ENCODE measurements at regions of chr10 and their contacts with region 1.

Region 1: GRCh38 chr10:84397735-84398144 is 69.4 kb downstream of the CCSER2 start:
- DNase-seq: no peak
- ATAC-seq: no peak
- H3K4me3 ChIP-seq: no peak overlapping the region
- H3K27ac ChIP-seq: no peak overlapping the region
- H3K4me1 ChIP-seq: no peaks in the 10 kb centered on the region
- H3K27me3 ChIP-seq: no peaks in the 10 kb centered on the region
- CTCF ChIP-seq: no peak

Region 2: DNA sequence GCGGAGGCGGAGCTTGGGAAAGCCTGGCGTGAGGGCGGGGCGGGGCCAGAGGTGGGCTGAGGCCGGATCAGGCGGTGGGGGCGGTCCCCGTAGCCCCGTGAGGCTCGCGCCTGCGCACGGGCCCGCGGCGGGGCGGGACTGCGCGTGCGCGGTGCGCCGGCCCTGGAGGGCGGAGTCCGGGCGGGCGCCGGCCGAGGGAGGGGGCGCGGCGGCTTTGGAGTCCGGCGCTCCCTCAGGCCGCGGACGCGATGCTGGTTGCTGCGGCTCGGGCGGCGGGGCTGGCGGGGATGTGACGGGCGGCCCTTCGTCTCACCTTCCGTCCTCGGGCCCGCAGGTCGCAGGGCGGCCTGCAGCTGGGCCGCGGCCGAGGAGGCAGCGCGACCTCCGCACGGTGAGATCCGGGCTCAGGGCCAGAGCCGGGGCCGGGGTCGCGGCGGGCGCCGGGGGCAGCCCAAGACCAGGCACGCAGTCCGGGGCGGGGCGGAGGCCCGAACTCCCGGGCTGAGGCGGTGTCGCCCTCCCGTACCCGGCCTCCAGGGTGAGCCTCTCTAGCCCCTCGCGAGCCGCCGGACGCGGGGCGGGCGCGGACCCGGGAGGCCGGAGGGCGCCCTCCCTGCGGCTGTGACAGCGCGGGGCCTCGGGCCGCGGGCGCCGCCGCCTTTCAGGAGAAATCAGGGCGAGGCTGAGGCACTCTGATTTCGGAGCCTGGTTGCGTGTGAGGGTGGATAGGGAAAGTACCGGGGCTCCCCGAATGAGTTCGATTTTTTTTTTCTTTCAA is 69.1 kb before region 1 on chr10 and contains the start of gene CCSER2:
- CTCF ChIA-PET with region 1: interaction called, 10 read pairs
- POLR2A ChIA-PET with region 1: no interaction called
- in situ Hi-C with region 1: no loop called
- intact Hi-C with region 1: no loop called
- DNase-seq: peak; percentile 56
- ATAC-seq: peak; percentile 96
- H3K4me3 ChIP-seq: peak within 1 kb of the TSS; percentile 82 to 85
- H3K27ac ChIP-seq: peak within 1 kb of the TSS; percentile 91
- H3K4me1 ChIP-seq: peaks cover 21% of the 10 kb centered on the region
- H3K27me3 ChIP-seq: no peaks in the 10 kb centered on the region
- CTCF ChIP-seq: peak; percentile 37; the same call in 1 of the 2 replicates
- total RNA-seq, gene CCSER2: 63.7 TPM

Region 3: DNA sequence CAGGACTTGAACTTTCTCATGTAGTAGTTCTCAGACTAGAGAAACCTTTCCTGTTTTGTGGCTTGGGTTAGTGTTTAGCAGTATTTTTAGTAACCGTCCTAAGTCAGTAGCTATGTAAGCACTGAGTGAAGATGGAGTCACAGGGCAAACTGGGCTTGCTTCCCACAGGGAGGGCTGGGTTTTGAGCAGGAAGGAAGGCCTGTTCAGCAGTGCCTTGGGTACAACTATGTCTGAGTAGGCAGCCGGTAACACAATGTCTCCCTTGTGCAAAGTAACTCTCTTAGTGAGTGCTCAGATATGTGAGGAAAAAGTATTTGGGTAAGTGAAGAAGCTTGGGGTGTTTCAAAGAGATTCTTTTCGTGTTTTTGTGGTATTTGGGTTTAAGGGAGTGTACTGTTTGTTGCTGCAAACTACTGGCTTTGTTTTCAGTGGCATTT is 27.0 kb after region 1 on chr10:
- CTCF ChIA-PET with region 1: no interaction called
- POLR2A ChIA-PET with region 1: no interaction called
- in situ Hi-C with region 1: no loop called
- intact Hi-C with region 1: no loop called
- DNase-seq: peak; percentile 84
- ATAC-seq: peak; percentile 97
- H3K4me3 ChIP-seq: peak overlapping the region; percentile 5 to 7; a peak in 2 of 4 replicates
- H3K27ac ChIP-seq: peak overlapping the region; percentile 41; the same call in 1 of the 2 replicates
- H3K4me1 ChIP-seq: peaks cover 9% of the 10 kb centered on the region; the same call in 1 of the 2 replicates
- H3K27me3 ChIP-seq: no peaks in the 10 kb centered on the region
- CTCF ChIP-seq: no peak

Region 4: GRCh38 chr10:84493361-84493760 is 95.6 kb after region 1 on chr10:
- CTCF ChIA-PET with region 1: no interaction called
- POLR2A ChIA-PET with region 1: no interaction called
- in situ Hi-C with region 1: no loop called
- intact Hi-C with region 1: no loop called
- DNase-seq: no peak
- ATAC-seq: no peak
- H3K4me3 ChIP-seq: no peak overlapping the region
- H3K27ac ChIP-seq: no peak overlapping the region
- H3K4me1 ChIP-seq: no peaks in the 10 kb centered on the region
- H3K27me3 ChIP-seq: no peaks in the 10 kb centered on the region
- CTCF ChIP-seq: no peak

Region 5: DNA sequence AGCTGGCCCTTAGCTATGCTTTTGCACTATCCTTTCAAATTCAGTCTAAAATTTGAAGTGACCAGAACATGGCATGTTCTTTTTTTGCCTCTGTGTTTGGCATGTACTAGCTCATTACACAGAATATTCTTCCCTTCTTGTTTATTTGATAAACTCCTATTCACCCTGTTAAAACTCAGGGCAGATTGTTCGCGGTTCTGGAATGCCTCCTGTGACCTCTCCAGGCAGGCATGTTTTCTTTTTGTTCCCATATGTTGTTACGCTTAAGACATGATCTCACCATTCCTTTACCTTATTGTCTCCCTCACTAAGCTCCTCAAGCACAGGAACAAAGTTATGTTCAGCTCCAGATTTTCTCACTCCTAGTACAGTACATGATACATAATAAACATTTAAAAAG is 112.4 kb after region 1 on chr10:
- CTCF ChIA-PET with region 1: no interaction called
- POLR2A ChIA-PET with region 1: no interaction called
- in situ Hi-C with region 1: no loop called
- intact Hi-C with region 1: no loop called
- DNase-seq: no peak
- ATAC-seq: no peak
- H3K4me3 ChIP-seq: no peak overlapping the region
- H3K27ac ChIP-seq: no peak overlapping the region
- H3K4me1 ChIP-seq: no peaks in the 10 kb centered on the region
- H3K27me3 ChIP-seq: no peaks in the 10 kb centered on the region
- CTCF ChIP-seq: no peak